ENCODE measurements at regions of chr1 and their contacts with region 1.

Region 1: GRCh38 chr1:28259307-28260167 is at the start of gene SESN2:
- DNase-seq: peak; percentile 94 to 99
- H3K4me3 ChIP-seq: peak within 1 kb of the TSS; percentile 73 to 97 (median 88)
- H3K27ac ChIP-seq: peak within 1 kb of the TSS; percentile 67; the same call in 1 of the 2 replicates
- H3K4me1 ChIP-seq: peaks cover 3 to 17% (median 11%) of the 10 kb centered on the region in 4 experiments; a peak in 5 of 7 replicates
- H3K27me3 ChIP-seq: no peaks in the 10 kb centered on the region
- CTCF ChIP-seq: no peak
- EP300 ChIP-seq: no peak
- POLR2A ChIP-seq: peak; percentile 79 to 95
- RAD21 ChIP-seq: no peak
- total RNA-seq, gene SESN2: 22.6 and 25.1 TPM in 2 replicates

Region 2: DNA sequence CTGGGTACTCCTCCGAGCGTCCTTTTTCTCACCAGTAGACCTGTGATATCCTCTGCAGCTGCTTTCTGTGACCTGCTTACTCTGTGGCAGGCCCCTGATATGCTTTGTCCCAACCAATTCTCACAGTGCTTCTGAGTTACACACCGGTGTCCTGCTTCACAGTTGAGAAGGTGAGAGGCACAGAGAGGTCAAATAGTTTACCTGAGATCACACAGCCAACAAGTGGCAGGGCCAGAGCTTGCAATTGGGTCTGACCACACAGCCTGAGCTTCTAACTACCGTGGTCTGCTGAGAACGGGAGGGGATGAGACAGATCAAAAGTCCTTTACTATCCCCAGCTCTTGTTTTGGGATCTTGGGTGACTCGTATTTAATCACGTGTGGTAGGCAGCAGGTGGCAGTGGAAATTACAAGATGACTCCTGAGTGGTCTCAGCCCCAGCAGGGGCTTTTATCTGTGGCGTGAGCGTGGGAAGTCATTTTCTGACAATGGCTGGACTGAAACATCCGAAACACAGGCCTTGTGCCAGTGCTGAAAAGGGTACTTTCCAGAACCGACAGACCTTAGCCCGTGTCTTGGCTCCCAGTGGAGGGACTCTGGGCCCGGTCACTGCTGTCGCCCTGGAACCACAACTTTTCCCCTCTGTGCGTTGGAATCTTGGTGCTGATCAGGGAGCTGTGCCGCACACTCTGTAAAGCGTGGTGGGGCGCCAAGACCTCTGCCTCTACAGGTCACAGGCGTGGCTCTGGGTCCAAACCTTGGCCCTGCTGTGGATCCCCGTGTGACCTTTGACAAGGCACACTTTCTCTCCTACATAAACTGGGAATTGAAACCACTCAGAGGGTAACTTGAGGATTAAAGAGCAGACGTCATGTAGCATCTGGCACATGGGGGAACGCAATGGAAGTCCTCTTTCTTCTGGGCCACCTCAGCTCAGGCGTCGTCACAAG is 375.3 kb before region 1 on chr1:
- CTCF ChIA-PET with region 1: no interaction called
- POLR2A ChIA-PET with region 1: no interaction called
- DNase-seq: no peak
- H3K4me3 ChIP-seq: no peak overlapping the region
- H3K27ac ChIP-seq: no peak overlapping the region
- H3K4me1 ChIP-seq: no peaks in the 10 kb centered on the region
- H3K27me3 ChIP-seq: no peaks in the 10 kb centered on the region
- CTCF ChIP-seq: no peak
- EP300 ChIP-seq: no peak
- POLR2A ChIP-seq: no peak
- RAD21 ChIP-seq: no peak

Region 3: GRCh38 chr1:28104866-28105467 is 154.6 kb before region 1 on chr1:
- CTCF ChIA-PET with region 1: no interaction called
- POLR2A ChIA-PET with region 1: no interaction called
- DNase-seq: peak; percentile 81 to 87
- H3K4me3 ChIP-seq: peak overlapping the region; percentile 4 to 49 (median 22); a peak in 6 of 8 replicates
- H3K27ac ChIP-seq: peak overlapping the region; percentile 18; the same call in 1 of the 2 replicates
- H3K4me1 ChIP-seq: peaks cover 0 to 2% (median 0%) of the 10 kb centered on the region in 4 experiments; a peak in 2 of 7 replicates
- H3K27me3 ChIP-seq: no peaks in the 10 kb centered on the region
- CTCF ChIP-seq: no peak
- EP300 ChIP-seq: no peak
- POLR2A ChIP-seq: peak; percentile 68 to 86
- RAD21 ChIP-seq: no peak

Region 4: GRCh38 chr1:28115267-28115666 is 144.3 kb before region 1 on chr1:
- CTCF ChIA-PET with region 1: no interaction called
- POLR2A ChIA-PET with region 1: no interaction called
- DNase-seq: no peak
- H3K4me3 ChIP-seq: no peak overlapping the region
- H3K27ac ChIP-seq: no peak overlapping the region
- H3K4me1 ChIP-seq: no peaks in the 10 kb centered on the region
- H3K27me3 ChIP-seq: no peaks in the 10 kb centered on the region
- CTCF ChIP-seq: no peak
- EP300 ChIP-seq: no peak
- POLR2A ChIP-seq: no peak
- RAD21 ChIP-seq: no peak

Region 5: DNA sequence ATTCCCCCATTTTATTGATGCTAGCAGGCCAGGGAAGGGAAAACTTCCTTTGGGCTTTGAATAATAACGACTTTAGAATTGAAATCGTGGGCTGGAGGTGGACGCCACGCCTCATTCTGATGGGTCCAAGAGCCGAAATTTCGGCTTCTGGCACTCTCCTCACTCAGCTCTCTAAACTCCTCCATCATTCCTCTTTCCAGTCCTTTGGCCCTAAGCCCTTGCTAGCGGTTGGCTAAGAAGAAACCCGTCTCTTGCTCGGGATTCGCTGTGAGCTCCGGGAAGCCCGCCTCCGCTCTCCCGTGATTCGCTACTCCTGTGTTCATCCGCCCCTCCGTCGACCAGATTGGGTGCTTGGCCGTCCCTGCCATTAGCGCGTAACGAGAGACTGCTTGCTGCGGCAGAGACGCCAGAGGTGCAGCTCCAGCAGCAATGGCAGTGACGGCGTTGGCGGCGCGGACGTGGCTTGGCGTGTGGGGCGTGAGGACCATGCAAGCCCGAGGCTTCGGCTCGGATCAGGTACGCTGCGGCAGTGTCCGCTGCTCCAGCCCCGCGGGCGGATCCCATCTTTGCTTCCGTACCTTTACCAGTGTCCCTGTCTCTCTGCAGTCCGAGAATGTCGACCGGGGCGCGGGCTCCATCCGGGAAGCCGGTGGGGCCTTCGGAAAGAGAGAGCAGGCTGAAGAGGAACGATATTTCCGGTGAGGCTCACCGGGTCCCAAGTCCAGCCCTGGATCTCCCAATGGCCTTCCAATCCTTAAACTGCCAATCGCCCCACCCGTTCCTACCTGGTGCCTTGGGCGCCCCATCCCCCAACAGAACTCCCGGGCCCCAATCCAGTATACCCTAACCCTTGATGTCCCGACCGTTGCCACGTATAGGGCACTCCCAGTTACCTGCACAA is 23.5 kb before region 1 on chr1 and contains the start of gene ATP5IF1:
- CTCF ChIA-PET with region 1: interaction called, 3 read pairs
- POLR2A ChIA-PET with region 1: interaction called, 116 read pairs
- DNase-seq: peak; percentile 88 to 90
- H3K4me3 ChIP-seq: peak within 1 kb of the TSS; percentile 94 to 99 (median 96)
- H3K27ac ChIP-seq: peak within 1 kb of the TSS; percentile 84
- H3K4me1 ChIP-seq: peaks cover 0 to 4% (median 4%) of the 10 kb centered on the region in 4 experiments; a peak in 4 of 7 replicates
- H3K27me3 ChIP-seq: no peaks in the 10 kb centered on the region
- CTCF ChIP-seq: no peak
- EP300 ChIP-seq: no peak
- POLR2A ChIP-seq: peak; percentile 86 to 94
- RAD21 ChIP-seq: no peak
- total RNA-seq, gene ATP5IF1: 198 and 202 TPM in 2 replicates

Region 6: DNA sequence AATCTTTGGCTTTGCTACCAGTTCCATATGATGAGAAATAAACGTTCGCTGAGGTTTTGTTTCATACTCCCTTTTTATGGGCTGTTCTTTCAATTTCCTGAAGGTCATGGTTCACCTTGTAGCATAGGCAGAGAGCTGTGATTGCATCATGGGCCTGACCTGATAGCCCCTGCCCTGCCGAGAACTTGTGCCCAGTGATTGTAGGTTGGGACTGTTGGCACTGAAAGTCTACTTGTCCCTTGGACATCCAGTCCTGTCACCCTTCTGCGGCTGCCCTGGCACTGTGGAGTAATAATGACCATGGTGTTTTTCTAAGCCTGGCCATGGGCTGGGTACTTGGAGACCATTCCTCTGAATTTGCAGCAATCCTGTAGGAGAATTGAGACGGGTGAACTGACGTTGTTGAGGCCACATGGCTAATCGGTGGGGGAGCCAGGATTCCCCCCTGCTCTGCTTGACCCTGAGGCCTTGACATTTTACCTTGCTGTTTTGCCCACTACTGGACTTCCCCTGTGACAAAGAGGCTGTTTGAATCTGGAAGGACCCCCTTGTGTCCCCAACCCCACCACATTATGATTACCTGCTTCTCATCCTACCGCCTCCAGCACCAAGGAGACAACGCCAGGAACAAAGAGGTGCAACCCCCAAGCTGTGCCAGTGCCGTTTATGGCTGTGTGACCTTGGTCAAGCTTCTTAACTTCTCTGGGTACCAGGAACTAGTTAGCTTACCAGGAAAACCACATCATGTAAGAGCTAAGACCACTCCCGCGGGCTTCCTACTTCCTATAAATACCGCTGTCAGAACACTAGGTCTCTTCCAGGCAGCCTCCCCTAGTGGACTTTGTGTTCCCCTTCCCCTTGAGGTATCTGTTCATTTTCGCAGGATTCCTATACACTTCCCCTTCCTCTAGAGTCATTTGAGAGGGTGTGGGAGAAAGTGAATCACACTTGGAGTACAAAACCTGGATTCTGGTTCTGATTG is 23.2 kb after region 1 on chr1:
- CTCF ChIA-PET with region 1: no interaction called
- POLR2A ChIA-PET with region 1: interaction called, 324 read pairs
- DNase-seq: no peak
- H3K4me3 ChIP-seq: no peak overlapping the region
- H3K27ac ChIP-seq: peak overlapping the region; percentile 21; the same call in 1 of the 2 replicates
- H3K4me1 ChIP-seq: no peaks in the 10 kb centered on the region
- H3K27me3 ChIP-seq: no peaks in the 10 kb centered on the region
- CTCF ChIP-seq: no peak
- EP300 ChIP-seq: no peak
- POLR2A ChIP-seq: no peak
- RAD21 ChIP-seq: no peak

Region 7: DNA sequence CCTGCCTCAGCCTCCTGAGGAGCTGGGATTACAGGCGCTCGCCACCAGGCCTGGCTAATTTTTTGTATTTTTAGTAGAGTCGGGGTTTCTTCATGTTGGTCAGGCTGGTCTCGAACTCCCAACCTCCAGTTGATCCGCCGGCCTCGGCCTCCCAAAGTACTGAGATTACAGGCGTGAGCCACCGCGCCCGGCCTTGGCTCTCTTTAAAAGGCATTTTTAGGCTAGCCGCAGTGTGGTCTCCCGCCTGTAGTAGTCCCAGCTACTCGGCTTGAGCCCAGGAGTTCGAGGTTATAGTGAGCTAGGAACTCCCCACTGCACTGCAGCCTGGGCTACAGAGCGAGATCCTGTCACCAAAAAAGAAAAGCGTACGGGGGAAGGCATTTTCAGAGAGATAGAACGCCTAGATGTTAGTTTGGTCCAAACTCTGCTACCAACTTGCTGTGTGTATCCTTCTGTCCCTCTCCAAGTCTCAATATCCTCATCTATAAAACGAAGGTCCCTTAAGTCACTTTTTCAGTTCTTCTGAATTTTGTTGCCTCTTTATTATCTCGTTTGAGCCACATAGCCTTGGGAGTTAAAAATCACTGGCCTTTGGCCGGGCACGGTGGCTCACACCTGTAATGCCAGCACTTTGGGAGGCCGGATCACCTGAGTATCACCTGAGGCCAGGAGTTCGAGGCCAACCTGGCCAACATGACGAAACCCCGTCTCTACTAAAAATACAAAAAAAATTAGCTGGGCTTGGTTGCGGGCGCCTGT is 70.0 kb after region 1 on chr1:
- CTCF ChIA-PET with region 1: interaction called, 4 read pairs
- POLR2A ChIA-PET with region 1: interaction called, 29 read pairs
- DNase-seq: peak in 1 of 2 experiments; percentile 56
- H3K4me3 ChIP-seq: peak overlapping the region; percentile 49 to 74 (median 72)
- H3K27ac ChIP-seq: peak overlapping the region; percentile 55; the same call in 1 of the 2 replicates
- H3K4me1 ChIP-seq: no peaks in the 10 kb centered on the region; a peak in 1 of 7 replicates
- H3K27me3 ChIP-seq: no peaks in the 10 kb centered on the region; a peak in 1 of 7 replicates
- CTCF ChIP-seq: peak in 2 of 3 experiments; percentile 6 to 22; a peak in 2 of 4 replicates
- EP300 ChIP-seq: no peak
- POLR2A ChIP-seq: no peak; a peak in 1 of 3 replicates
- RAD21 ChIP-seq: peak in 1 of 2 experiments; percentile 17; a peak in 1 of 4 replicates

Measured in H1 (cell line).